ENCODE measurements at regions of chr2 and their contacts with region 1.

Region 1: GRCh38 chr2:195656859-195657633 is at the start of gene SLC39A10:
- DNase-seq: peak; percentile 97
- ATAC-seq: peak; percentile 84
- H3K4me3 Mint-ChIP-seq: peak within 1 kb of the TSS; percentile 98
- H3K27ac Mint-ChIP-seq: peak within 1 kb of the TSS; percentile 99
- H3K4me1 Mint-ChIP-seq: peaks cover 64% of the 10 kb centered on the region
- H3K27me3 Mint-ChIP-seq: no peaks in the 10 kb centered on the region
- CTCF ChIP-seq: no peak
- total RNA-seq, gene SLC39A10: 45.7 and 52.3 TPM in 2 replicates

Region 2: GRCh38 chr2:195404651-195405050 is 252.4 kb before region 1 on chr2:
- CTCF ChIA-PET with region 1: interaction called, 4 read pairs
- POLR2A ChIA-PET with region 1: interaction called, 3 read pairs
- intact Hi-C with region 1: loop called (anchors 1 kb)
- DNase-seq: no peak
- ATAC-seq: no peak
- H3K4me3 Mint-ChIP-seq: no peak overlapping the region
- H3K27ac Mint-ChIP-seq: no peak overlapping the region
- H3K4me1 Mint-ChIP-seq: no peaks in the 10 kb centered on the region
- H3K27me3 Mint-ChIP-seq: no peaks in the 10 kb centered on the region
- CTCF ChIP-seq: no peak

Region 3: GRCh38 chr2:195575879-195576401 is 81.1 kb before region 1 on chr2:
- CTCF ChIA-PET with region 1: interaction called, 221 read pairs
- POLR2A ChIA-PET with region 1: interaction called, 144 read pairs
- intact Hi-C with region 1: loop called (anchors 1 kb)
- DNase-seq: no peak
- ATAC-seq: peak; percentile 79
- H3K4me3 Mint-ChIP-seq: peak overlapping the region; percentile 70
- H3K27ac Mint-ChIP-seq: peak overlapping the region; percentile 76
- H3K4me1 Mint-ChIP-seq: peaks cover 50% of the 10 kb centered on the region
- H3K27me3 Mint-ChIP-seq: no peaks in the 10 kb centered on the region
- CTCF ChIP-seq: no peak

Region 4: DNA sequence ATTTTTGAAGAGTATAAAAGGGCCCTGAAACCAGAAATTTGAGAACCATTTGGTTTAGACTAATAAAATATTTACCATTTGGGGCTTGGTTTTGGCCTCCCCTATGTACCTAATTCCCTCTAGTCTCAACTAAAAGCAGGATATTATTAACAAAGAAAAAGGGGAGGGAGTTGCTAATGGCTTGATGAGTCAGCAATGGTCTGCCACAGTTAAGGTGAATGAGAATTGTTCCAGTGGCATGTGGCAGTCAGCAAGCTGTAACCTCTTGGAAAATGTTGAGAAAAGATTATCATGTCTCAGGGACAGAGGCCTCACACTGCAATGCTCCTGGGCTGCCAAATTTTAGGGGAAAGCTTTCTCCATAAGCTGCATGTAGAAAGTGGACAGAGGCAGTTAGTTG is 20.2 kb before region 1 on chr2:
- CTCF ChIA-PET with region 1: interaction called, 6 read pairs
- POLR2A ChIA-PET with region 1: interaction called, 40 read pairs
- intact Hi-C with region 1: no loop called
- DNase-seq: no peak
- ATAC-seq: no peak
- H3K4me3 Mint-ChIP-seq: no peak overlapping the region
- H3K27ac Mint-ChIP-seq: no peak overlapping the region
- H3K4me1 Mint-ChIP-seq: peaks cover 18% of the 10 kb centered on the region
- H3K27me3 Mint-ChIP-seq: no peaks in the 10 kb centered on the region
- CTCF ChIP-seq: no peak

Region 5: DNA sequence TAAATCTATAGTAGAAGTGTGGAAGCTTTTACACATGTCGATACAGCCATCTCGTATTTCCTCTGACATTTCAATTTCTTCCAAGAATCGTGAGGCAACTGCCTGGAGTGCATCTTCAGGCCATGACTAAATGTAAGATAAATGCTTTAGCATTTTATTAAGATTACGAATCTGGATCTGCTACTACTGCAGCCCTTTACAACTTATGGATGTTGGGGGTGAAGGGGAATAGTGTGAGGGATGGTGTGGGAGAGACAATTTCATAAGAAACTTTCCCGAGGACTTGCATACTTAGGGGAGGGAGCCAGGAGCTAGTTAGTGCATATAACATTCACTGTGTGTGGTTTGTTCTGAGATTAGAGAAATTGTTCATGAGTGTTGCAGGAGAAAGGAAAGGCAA is 204.8 kb after region 1 on chr2:
- CTCF ChIA-PET with region 1: no interaction called
- POLR2A ChIA-PET with region 1: no interaction called
- intact Hi-C with region 1: no loop called
- DNase-seq: no peak
- ATAC-seq: no peak
- H3K4me3 Mint-ChIP-seq: no peak overlapping the region
- H3K27ac Mint-ChIP-seq: no peak overlapping the region
- H3K4me1 Mint-ChIP-seq: no peaks in the 10 kb centered on the region
- H3K27me3 Mint-ChIP-seq: peaks cover 2% of the 10 kb centered on the region
- CTCF ChIP-seq: no peak

Region 6: GRCh38 chr2:196453613-196454047 is 796.6 kb after region 1 on chr2:
- CTCF ChIA-PET with region 1: no interaction called
- POLR2A ChIA-PET with region 1: no interaction called
- intact Hi-C with region 1: loop called (anchors 5 kb)
- DNase-seq: no peak
- ATAC-seq: peak; percentile 65
- H3K4me3 Mint-ChIP-seq: no peak overlapping the region
- H3K27ac Mint-ChIP-seq: no peak overlapping the region
- H3K4me1 Mint-ChIP-seq: no peaks in the 10 kb centered on the region
- H3K27me3 Mint-ChIP-seq: peaks cover 9% of the 10 kb centered on the region
- CTCF ChIP-seq: no peak

Region 7: GRCh38 chr2:197515739-197516392 is 1858.8 kb after region 1 on chr2 and contains the start of gene MOB4:
- CTCF ChIA-PET with region 1: no interaction called
- POLR2A ChIA-PET with region 1: interaction called, 3 read pairs
- intact Hi-C with region 1: loop called (anchors 10 kb)
- DNase-seq: peak; percentile 96
- ATAC-seq: peak; percentile 95
- H3K4me3 Mint-ChIP-seq: peak within 1 kb of the TSS; percentile 96
- H3K27ac Mint-ChIP-seq: peak within 1 kb of the TSS; percentile 95
- H3K4me1 Mint-ChIP-seq: peaks cover 33% of the 10 kb centered on the region
- H3K27me3 Mint-ChIP-seq: no peaks in the 10 kb centered on the region
- CTCF ChIP-seq: no peak
- total RNA-seq, gene MOB4: 21.7 and 22.1 TPM in 2 replicates